ENCODE measurements at regions of chr6 and their contacts with region 1.

Region 1: DNA sequence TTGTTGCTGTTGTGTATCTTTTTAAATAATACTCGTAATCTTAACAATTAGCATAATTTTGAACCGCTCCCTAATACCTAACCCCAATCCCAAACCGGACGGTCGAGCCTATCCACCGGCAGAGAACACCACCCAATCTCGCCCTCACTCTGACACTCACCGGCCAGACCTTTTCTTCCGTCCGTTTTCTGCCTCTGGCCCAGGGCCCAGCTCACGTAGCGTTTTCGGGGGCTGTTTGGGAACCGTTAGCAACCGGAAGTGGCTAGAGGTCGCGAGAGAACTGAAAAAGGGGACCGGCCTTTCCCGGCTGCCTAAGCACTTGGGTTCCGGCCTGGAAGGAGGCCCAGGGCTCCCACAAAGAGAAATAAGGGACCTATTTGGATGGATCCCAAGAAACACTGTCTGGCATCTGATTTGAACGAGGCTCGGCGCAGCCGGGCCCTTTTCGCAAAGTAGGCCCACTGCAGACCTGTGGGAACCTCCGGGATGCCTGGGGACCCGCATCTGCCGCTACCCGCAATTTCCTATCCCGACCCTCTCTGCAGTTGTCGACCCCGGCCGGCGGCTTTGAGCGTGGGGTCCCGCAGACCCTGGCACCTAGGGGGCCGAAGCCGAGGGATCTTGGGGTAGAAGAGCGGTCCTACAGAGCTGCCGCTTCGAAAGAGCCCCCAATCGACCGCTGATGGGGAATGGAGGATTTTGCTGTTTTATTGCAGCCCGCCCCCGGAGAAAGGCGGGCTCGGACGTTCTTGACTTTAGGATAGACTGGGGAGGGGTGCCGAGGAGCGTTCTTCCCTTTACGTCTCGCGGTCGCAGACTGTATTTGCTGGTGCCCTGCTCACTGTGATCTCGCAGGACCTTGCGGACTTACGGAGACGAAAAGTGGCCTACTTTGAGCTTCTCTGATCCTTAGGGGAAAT is 4.8 kb upstream of the ZKSCAN8 start:
- DNase-seq: peak; percentile 92
- H3K4me3 Mint-ChIP-seq: peak overlapping the region; percentile 93
- H3K27ac Mint-ChIP-seq: peak overlapping the region; percentile 94
- H3K4me1 Mint-ChIP-seq: peaks cover 58% of the 10 kb centered on the region
- H3K27me3 Mint-ChIP-seq: no peaks in the 10 kb centered on the region

Region 2: DNA sequence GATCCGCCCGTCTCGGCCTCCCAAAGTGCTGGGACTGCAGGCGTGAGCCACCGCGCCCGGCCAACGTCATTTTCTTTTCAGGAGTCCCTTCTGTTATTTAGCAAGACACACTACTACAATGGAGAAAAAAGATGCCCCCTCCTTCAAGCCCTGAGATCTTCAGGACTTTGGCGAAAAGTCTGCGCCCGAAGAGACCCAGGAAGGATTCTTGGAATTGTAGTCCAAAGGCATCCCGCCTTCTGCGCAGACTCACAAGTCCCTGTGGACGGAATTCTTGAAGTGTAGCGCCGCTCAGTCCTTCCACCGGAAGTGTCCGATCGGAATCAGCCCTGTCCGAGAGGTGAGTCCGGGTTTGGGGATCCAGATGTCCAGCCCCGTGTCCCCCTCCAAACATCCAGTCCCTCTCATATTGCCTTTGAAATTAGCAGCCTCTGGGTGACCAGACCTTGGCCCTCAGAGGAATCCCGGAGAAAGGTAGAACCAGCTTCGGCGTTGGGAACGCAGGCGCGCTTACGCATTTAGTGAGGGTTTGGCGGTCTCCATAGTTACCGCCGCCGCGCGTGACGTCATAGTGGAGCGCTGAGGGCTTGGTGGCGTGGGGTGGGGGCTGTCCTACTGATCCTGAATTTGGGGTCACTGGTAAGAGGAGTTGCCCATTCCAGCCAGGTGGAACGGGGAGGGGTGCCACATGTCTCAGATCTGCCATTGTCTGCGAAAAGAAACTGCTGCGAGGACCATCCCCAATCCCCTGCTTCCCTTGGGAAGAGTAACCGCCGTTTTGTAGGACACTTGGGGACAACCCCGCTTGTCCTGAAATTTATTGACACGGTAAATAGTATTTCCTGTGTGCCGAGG is 56.0 kb before region 1 on chr6:
- intact Hi-C with region 1: loop called (anchors 1 kb)
- DNase-seq: peak; percentile 97
- H3K4me3 Mint-ChIP-seq: peak overlapping the region; percentile 97
- H3K27ac Mint-ChIP-seq: peak overlapping the region; percentile 94
- H3K4me1 Mint-ChIP-seq: peaks cover 14% of the 10 kb centered on the region
- H3K27me3 Mint-ChIP-seq: no peaks in the 10 kb centered on the region

Region 3: GRCh38 chr6:28124102-28124970 is 12.5 kb before region 1 on chr6 and contains the start of gene ZSCAN16:
- intact Hi-C with region 1: loop called (anchors 1 kb)
- DNase-seq: peak; percentile 92
- H3K4me3 Mint-ChIP-seq: peak within 1 kb of the TSS; percentile 95
- H3K27ac Mint-ChIP-seq: peak within 1 kb of the TSS; percentile 83
- H3K4me1 Mint-ChIP-seq: peaks cover 48% of the 10 kb centered on the region
- H3K27me3 Mint-ChIP-seq: no peaks in the 10 kb centered on the region
- total RNA-seq, gene ZSCAN16: 3.0 and 4.0 TPM in 2 replicates

Region 4: GRCh38 chr6:28224131-28225055 is 87.5 kb after region 1 on chr6:
- intact Hi-C with region 1: loop called (anchors 5 kb)
- DNase-seq: no peak
- H3K4me3 Mint-ChIP-seq: peak overlapping the region; percentile 89
- H3K27ac Mint-ChIP-seq: peak overlapping the region; percentile 62
- H3K4me1 Mint-ChIP-seq: peaks cover 26% of the 10 kb centered on the region
- H3K27me3 Mint-ChIP-seq: peaks cover 44% of the 10 kb centered on the region

Region 5: DNA sequence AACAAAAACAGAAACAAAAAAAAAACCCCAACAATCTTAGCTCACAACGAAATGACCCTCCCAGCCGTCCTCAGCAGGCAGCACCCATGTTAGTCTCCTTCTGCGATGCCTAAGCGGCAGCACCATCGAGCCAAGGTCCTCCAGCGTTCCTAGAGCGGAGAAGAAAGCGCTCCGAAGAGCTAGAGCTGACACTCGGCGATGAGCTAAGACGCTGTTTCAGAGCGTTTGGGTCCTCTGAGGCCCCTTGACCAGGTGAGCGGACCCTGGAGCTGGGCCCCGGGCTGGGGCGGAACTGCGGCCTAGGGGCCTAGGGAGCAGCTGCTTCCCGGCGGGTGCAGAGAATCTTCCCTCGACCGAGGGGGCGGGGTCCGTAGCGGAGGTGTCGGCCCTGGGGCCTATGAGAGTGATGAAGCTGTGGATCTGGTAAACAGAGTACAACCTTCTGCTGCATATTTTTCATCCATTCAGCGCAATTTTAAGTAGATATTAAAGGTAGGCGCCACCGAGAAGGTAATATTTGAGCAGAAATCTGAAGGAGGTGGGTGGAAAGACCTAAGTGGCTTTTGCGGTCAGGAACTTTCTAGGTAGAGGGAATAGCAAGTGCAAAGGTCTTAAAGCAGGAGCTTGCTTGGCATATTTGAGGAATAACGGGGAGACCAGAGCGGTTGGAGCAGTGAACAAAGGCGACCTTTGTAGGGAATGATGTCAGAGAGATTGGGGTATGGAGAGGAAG is 130.3 kb after region 1 on chr6 and contains the start of gene ZSCAN26:
- intact Hi-C with region 1: loop called (anchors 5 kb)
- DNase-seq: peak; percentile 96
- H3K4me3 Mint-ChIP-seq: no peak within 1 kb of the TSS
- H3K27ac Mint-ChIP-seq: no peak within 1 kb of the TSS
- H3K4me1 Mint-ChIP-seq: peaks cover 11% of the 10 kb centered on the region
- H3K27me3 Mint-ChIP-seq: peaks cover 9% of the 10 kb centered on the region
- total RNA-seq, gene ZSCAN26: 5.9 and 7.7 TPM in 2 replicates

Region 6: GRCh38 chr6:28399350-28400121 is 262.7 kb after region 1 on chr6 and contains the start of gene ZSCAN12:
- intact Hi-C with region 1: loop called (anchors 5 kb)
- DNase-seq: peak; percentile 95
- H3K4me3 Mint-ChIP-seq: peak within 1 kb of the TSS; percentile 93
- H3K27ac Mint-ChIP-seq: peak within 1 kb of the TSS; percentile 92
- H3K4me1 Mint-ChIP-seq: peaks cover 49% of the 10 kb centered on the region
- H3K27me3 Mint-ChIP-seq: peaks cover 23% of the 10 kb centered on the region
- total RNA-seq, gene ZSCAN12: 5.8 and 5.9 TPM in 2 replicates